CD14-positive monocyte (primary cell): ENCODE measurements at regions of chr12 and their contacts with region 1.

Region 1: DNA sequence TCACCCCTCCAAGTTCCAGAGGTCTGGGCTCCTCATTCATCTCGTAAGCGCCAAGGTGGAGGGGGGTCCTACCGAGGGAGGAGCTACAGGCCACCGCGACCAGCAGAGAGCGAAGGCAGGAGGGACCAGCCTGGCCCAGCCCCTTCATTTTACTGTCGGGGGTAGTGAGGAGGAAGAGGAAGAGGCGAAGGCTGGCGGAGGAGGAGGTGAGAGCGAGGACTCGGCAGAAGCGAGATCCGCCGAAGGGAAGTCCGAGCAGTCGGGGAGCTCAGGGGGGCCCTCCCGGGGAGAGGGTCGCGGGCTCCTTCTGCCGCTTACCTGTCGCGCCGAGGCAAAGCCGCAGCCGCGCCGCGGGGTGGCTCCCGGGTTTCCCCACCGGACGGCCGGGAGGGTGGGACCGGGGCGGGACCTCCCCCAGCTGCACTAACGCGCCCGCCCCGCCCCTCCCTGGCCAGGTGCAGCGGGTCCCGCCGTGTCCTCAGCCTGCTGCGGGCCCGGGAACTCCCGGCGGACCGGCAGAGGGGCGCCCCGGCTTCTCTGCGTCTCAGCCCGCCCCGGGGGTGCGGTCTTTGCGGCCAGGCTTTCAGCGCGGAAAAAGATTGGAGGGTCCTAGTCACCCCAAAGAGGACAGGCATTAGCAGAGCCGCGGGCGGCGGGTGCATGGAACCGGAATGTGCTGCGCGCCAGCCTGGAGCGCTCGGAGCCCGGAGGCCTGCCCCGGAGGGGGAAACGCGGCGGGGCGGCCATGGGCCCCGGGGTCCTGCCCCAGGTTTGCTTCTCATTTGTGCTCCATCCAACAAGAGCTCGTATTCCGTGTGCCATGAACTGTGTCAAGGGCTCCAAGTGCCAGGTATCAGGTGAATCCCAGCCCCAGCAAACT is at the start of gene GALNT6:
- DNase-seq: peak in 2 of 3 donors; percentile 53
- H3K4me3 ChIP-seq: peak within 1 kb of the TSS; percentile 72 to 95 (median 85)
- H3K4me3 Mint-ChIP-seq: peak within 1 kb of the TSS; percentile 94 to 96
- H3K27ac ChIP-seq: peak within 1 kb of the TSS; percentile 86 to 94
- H3K27ac Mint-ChIP-seq: peak within 1 kb of the TSS; percentile 89 to 96 (median 94)
- H3K4me1 ChIP-seq: peaks cover 70 to 86% of the 10 kb centered on the region in 2 donors
- H3K4me1 Mint-ChIP-seq: peaks cover 77% of the 10 kb centered on the region
- H3K27me3 ChIP-seq: no peaks in the 10 kb centered on the region
- H3K27me3 Mint-ChIP-seq: peaks cover 0 to 4% (median 3%) of the 10 kb centered on the region in 3 donors
- CTCF ChIP-seq: no peak
- polyA plus RNA-seq, gene GALNT6: 3.2 to 12.9 (median 10.4) TPM

Region 2: DNA sequence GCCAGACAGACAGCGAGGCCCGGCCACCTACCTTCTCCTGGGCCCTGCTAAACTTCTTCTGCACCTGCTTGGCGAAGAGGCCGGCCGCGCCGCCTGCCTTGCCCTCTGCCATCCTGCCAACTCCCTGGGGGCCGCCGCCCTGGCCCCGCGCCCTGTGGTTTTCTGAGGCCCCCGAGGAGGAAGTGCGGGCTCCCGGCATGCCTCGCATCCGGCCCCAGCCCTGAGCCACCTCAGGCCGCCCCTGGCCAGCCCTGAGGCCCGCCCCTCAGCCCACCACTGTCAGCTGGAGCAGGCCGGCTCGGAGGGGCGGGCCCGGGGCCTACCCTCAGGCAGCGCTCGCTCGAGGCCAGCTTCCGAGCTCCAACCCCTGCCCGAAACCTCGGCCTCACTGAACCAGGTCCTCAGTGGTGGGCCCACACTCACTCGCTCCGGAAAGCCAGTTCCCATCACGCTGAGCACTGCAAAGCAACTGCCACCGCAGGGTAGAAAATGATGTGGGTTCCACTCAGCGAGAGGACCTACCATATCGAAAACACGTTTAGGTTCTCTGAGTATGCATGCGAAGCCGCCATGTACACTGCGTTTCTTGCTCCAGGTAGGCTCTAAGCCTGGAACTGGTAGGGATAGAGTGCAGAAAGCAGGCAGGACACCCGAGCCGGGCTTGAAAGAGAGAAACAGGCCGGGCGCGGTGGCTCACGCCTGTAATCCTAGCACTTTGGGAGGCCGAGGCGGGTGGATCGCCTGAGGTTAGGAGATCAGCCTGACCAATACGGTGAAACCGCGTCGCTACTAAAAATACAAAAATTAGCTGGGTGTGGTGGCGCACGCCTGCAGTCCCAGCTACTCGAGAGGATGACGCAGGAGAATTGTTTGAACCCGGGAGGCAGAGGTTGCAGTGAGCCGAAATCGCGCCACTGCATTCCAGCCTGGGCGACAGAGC is 67.3 kb before region 1 on chr12 and contains the start of gene BIN2:
- intact Hi-C with region 1: loop called in 1 of 2 experiments (anchors 5 kb)
- DNase-seq: peak in 2 of 3 donors; percentile 56 to 58
- H3K4me3 ChIP-seq: peak within 1 kb of the TSS; percentile 68 to 99 (median 81)
- H3K4me3 Mint-ChIP-seq: peak within 1 kb of the TSS; percentile 92 to 98
- H3K27ac ChIP-seq: peak within 1 kb of the TSS; percentile 83 to 95
- H3K27ac Mint-ChIP-seq: peak within 1 kb of the TSS; percentile 89 to 95 (median 92)
- H3K4me1 ChIP-seq: peaks cover 92 to 97% of the 10 kb centered on the region in 2 donors
- H3K4me1 Mint-ChIP-seq: peaks cover 92% of the 10 kb centered on the region
- H3K27me3 ChIP-seq: no peaks in the 10 kb centered on the region
- H3K27me3 Mint-ChIP-seq: peaks cover 0 to 2% (median 0%) of the 10 kb centered on the region in 3 donors
- CTCF ChIP-seq: no peak
- polyA plus RNA-seq, gene BIN2: 120 to 376 (median 196) TPM

Region 3: DNA sequence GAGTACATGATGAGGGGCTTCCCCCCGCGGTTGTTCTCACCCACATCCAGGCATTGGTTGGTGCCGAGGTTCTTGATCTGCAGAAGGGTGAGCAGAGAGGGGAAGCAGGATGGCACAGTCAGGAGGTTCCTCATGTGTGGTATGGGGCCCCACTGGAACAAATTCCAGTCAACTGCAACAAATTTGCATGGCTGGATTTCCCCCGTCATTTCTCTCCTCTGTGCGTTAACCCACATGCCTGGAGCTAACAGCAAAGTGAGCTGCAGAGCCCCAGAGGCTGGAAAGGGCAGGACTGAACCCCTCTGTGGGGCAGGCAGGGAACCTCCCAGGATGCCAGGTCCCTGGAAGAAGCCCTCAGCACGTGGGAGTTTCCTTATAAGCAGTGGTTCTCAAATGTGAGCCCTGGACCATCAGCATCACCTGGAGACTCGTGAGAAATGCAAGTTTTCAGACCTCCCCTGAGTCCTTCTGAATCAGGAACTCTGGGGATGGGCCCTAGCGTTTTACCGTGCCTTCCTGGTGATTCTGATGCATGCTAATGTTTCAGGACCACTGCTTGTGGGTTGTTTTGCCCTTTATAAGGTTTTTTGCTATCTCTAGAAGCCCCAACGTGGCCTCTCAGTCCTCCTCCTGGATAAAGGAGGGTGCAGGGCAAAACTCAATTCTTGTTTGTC is 34.0 kb before region 1 on chr12:
- intact Hi-C with region 1: no loop called
- DNase-seq: peak in 1 of 3 donors; percentile 11
- H3K4me3 ChIP-seq: no peak overlapping the region
- H3K4me3 Mint-ChIP-seq: no peak overlapping the region
- H3K27ac ChIP-seq: no peak overlapping the region
- H3K27ac Mint-ChIP-seq: no peak overlapping the region
- H3K4me1 ChIP-seq: no peaks in the 10 kb centered on the region
- H3K4me1 Mint-ChIP-seq: peaks cover 2% of the 10 kb centered on the region
- H3K27me3 ChIP-seq: no peaks in the 10 kb centered on the region
- H3K27me3 Mint-ChIP-seq: no peaks in the 10 kb centered on the region
- CTCF ChIP-seq: no peak

Region 4: GRCh38 chr12:51631591-51631990 is 240.1 kb after region 1 on chr12:
- intact Hi-C with region 1: no loop called
- DNase-seq: no peak
- H3K4me3 ChIP-seq: no peak overlapping the region
- H3K4me3 Mint-ChIP-seq: no peak overlapping the region
- H3K27ac ChIP-seq: no peak overlapping the region
- H3K27ac Mint-ChIP-seq: no peak overlapping the region
- H3K4me1 ChIP-seq: no peaks in the 10 kb centered on the region
- H3K4me1 Mint-ChIP-seq: no peaks in the 10 kb centered on the region
- H3K27me3 ChIP-seq: no peaks in the 10 kb centered on the region
- H3K27me3 Mint-ChIP-seq: peaks cover 1 to 4% (median 1%) of the 10 kb centered on the region in 3 donors
- CTCF ChIP-seq: no peak